ENCODE measurements at regions of chr1 and their contacts with region 1.

Region 1: DNA sequence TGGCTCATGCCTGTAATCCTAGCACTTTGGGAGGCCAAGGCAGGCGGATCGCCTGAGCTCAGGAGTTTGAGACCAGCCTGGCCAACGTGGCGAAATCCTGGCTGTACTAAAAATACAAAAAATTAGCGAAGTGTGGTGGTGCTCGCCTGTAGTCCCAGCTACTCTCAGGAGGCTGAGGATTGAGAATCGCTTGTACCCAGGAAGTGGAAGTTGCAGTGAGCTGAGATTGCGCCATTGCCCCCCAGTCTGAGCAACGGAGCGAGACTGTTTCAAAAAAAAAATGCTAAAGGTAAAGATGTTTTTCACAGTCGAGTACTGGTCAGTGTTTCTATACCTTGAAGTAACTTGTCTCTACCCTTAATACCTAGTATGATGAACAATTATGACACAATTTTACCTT is 11.1 kb downstream of the GLRX2 start:
- DNase-seq: no peak
- ATAC-seq: peak; percentile 7; the same call in 2 of the 3 replicates
- H3K4me3 ChIP-seq: no peak overlapping the region
- H3K27ac ChIP-seq: no peak overlapping the region
- H3K4me1 ChIP-seq: no peaks in the 10 kb centered on the region
- H3K27me3 ChIP-seq: no peaks in the 10 kb centered on the region
- CTCF ChIP-seq: no peak
- EP300 ChIP-seq: no peak
- POLR2A ChIP-seq: no peak
- RAD21 ChIP-seq: no peak

Region 2: GRCh38 chr1:193104906-193105820 is 11.1 kb after region 1 on chr1 and contains the start of gene GLRX2:
- CTCF ChIA-PET with region 1: no interaction called
- POLR2A ChIA-PET with region 1: interaction called, 29 read pairs
- in situ Hi-C with region 1: no loop called
- intact Hi-C with region 1: no loop called
- DNase-seq: peak; percentile 97 to 98 (median 98)
- ATAC-seq: peak; percentile 91
- H3K4me3 ChIP-seq: peak within 1 kb of the TSS; percentile 73
- H3K27ac ChIP-seq: peak within 1 kb of the TSS; percentile 79
- H3K4me1 ChIP-seq: peaks cover 10 to 18% of the 10 kb centered on the region in 2 experiments; a peak in 4 of 5 replicates
- H3K27me3 ChIP-seq: no peaks in the 10 kb centered on the region
- CTCF ChIP-seq: peak in 1 of 3 experiments; percentile 14; a peak in 2 of 6 replicates
- EP300 ChIP-seq: peak; percentile 42; the same call in 1 of the 2 replicates
- POLR2A ChIP-seq: peak; percentile 84
- RAD21 ChIP-seq: peak; percentile 24 to 45; a peak in 3 of 4 replicates
- polyA plus RNA-seq, gene GLRX2: 13.3 to 16.8 TPM

Region 3: DNA sequence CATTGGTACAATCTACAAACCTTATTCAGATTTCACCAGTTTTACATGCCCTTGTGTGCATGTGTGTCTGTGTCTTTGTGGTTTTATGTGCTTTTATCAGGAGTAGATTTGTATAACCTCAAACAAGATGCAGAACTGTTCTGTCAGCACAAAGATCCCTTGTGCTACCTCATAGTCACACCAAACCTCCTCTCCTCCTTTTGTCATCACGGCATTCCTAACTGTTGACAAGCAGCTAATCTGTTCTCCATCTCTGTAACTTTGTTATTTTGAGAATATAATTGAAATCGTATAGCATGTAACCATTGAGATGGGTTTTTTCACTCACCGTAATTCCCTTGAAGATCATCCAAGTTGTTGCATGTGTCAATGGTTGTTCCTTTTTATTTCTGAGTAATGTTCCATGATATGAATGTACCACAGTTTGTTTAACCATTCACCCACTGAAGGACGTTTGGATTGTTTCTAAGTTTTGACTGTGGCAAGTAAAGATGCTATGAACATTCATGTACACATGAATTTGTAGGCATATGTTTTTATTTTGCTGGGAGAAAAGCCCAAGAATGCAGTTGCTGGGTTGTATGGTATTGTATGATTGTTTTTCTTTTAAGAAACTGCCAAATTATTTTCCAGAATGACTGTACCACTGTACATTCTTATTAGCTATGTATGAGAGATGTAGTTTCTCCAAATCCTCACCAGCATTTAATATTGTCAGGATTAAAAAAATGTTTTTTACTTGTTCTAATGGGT is 170.4 kb after region 1 on chr1:
- CTCF ChIA-PET with region 1: no interaction called
- POLR2A ChIA-PET with region 1: no interaction called
- in situ Hi-C with region 1: no loop called
- intact Hi-C with region 1: no loop called
- DNase-seq: no peak
- ATAC-seq: no peak
- H3K4me3 ChIP-seq: no peak overlapping the region
- H3K27ac ChIP-seq: no peak overlapping the region
- H3K4me1 ChIP-seq: no peaks in the 10 kb centered on the region
- H3K27me3 ChIP-seq: no peaks in the 10 kb centered on the region
- CTCF ChIP-seq: no peak
- EP300 ChIP-seq: no peak
- POLR2A ChIP-seq: no peak
- RAD21 ChIP-seq: no peak

Measured in K562 (cell line).